A673 (cell line): ENCODE measurements at regions of chr9 and their contacts with region 1.

Region 1: DNA sequence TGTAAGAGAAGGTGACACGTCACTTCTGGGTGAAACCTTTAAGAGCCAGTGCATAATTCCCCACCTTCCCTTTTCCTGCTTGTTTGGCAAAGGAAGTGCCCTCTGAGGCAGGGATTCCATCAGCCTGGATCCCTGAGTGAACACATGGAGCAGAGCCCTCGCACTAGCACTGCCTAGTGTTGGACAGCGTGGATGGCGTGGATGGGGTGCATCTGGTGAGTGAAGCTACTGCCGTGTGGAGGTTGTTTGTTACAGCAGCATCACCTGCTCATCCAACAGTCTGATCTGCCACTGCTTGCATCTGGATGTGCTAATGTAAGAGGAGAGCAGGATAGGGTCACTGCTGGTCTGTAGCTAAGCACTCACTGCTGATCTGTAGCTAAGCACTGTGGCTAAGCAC is 35.2 kb downstream of the SLC35D2 start:
- DNase-seq: no peak
- H3K4me3 ChIP-seq: no peak overlapping the region
- H3K27ac ChIP-seq: no peak overlapping the region
- H3K4me1 ChIP-seq: peaks cover 7% of the 10 kb centered on the region
- H3K27me3 ChIP-seq: no peaks in the 10 kb centered on the region
- CTCF ChIP-seq: no peak

Region 2: DNA sequence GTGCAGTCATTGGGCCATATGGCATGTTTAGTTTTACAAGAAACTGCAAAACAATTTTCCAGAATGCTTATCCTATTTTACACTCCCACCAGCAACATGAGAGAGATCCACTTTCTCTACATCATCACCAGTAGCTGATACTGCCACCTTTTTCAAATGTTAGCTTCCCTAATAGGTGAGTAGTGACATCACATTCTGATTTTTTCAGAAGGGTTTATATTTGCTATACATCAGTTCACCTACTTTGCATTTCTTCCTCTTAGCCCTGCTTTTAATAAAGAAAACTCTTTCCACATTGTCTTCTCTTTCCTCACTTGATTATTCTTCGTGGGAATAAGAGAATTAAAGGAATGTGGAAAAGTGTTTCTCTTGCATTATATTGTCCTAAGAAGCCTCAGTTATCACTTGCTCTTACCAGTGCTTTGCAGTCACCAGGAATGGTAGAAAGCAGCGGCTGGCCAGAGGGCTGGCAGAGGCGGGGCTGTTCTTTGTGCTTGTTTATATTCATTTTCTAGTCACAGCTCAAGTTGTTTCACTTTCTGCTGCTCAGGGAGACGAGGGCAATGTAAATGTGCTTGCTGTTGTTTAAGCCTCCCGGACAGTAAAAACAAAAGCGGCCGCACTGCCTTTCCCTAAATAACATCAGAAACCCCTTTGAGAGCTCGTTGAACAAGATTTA is 211.1 kb before region 1 on chr9:
- CTCF ChIA-PET with region 1: no interaction called
- POLR2A ChIA-PET with region 1: interaction called, 12 read pairs
- intact Hi-C with region 1: no loop called
- DNase-seq: no peak
- H3K4me3 ChIP-seq: no peak overlapping the region
- H3K27ac ChIP-seq: no peak overlapping the region
- H3K4me1 ChIP-seq: peaks cover 9% of the 10 kb centered on the region
- H3K27me3 ChIP-seq: no peaks in the 10 kb centered on the region
- CTCF ChIP-seq: no peak

Region 3: GRCh38 chr9:96203867-96204501 is 144.3 kb before region 1 on chr9:
- CTCF ChIA-PET with region 1: no interaction called
- POLR2A ChIA-PET with region 1: no interaction called
- intact Hi-C with region 1: no loop called
- DNase-seq: no peak
- H3K4me3 ChIP-seq: no peak overlapping the region
- H3K27ac ChIP-seq: no peak overlapping the region
- H3K4me1 ChIP-seq: no peaks in the 10 kb centered on the region
- H3K27me3 ChIP-seq: no peaks in the 10 kb centered on the region
- CTCF ChIP-seq: no peak